Naive thymus-derived CD4-positive, alpha-beta T cell (primary cell): ENCODE measurements at regions of chr12 and their contacts with region 1.

Region 1: GRCh38 chr12:65169320-65170208 is at the start of gene LEMD3:
- DNase-seq: peak; percentile 87 to 97 (median 94)
- ATAC-seq: peak; percentile 95
- H3K4me3 ChIP-seq: peak within 1 kb of the TSS; percentile 84
- H3K4me3 Mint-ChIP-seq: peak within 1 kb of the TSS in 8 of 10 donors; percentile 92 to 100 (median 99)
- H3K27ac ChIP-seq: peak within 1 kb of the TSS; percentile 93
- H3K27ac Mint-ChIP-seq: peak within 1 kb of the TSS; percentile 94 to 100 (median 99)
- H3K4me1 ChIP-seq: peaks cover 33 to 40% of the 10 kb centered on the region in 2 donors
- H3K4me1 Mint-ChIP-seq: peaks cover 10 to 35% (median 23%) of the 10 kb centered on the region in 7 donors
- H3K27me3 ChIP-seq: no peaks in the 10 kb centered on the region
- H3K27me3 Mint-ChIP-seq: peaks cover 0 to 5% (median 2%) of the 10 kb centered on the region in 5 donors
- total RNA-seq, gene LEMD3: 37.8 to 60.1 (median 52.8) TPM

Region 2: GRCh38 chr12:63779498-63780481 is 1389.8 kb before region 1 on chr12 and contains the start of gene RXYLT1:
- CTCF ChIA-PET with region 1: no interaction called
- POLR2A ChIA-PET with region 1: no interaction called
- intact Hi-C with region 1: loop called (anchors 1 to 10 kb)
- DNase-seq: peak; percentile 68 to 85 (median 77)
- ATAC-seq: peak; percentile 98
- H3K4me3 ChIP-seq: peak within 1 kb of the TSS; percentile 72
- H3K4me3 Mint-ChIP-seq: peak within 1 kb of the TSS; percentile 91 to 99 (median 96)
- H3K27ac ChIP-seq: peak within 1 kb of the TSS; percentile 88
- H3K27ac Mint-ChIP-seq: peak within 1 kb of the TSS; percentile 89 to 98 (median 94)
- H3K4me1 ChIP-seq: peaks cover 3 to 13% of the 10 kb centered on the region in 2 donors
- H3K4me1 Mint-ChIP-seq: peaks cover 6 to 48% (median 25%) of the 10 kb centered on the region in 7 donors
- H3K27me3 ChIP-seq: no peaks in the 10 kb centered on the region
- H3K27me3 Mint-ChIP-seq: peaks cover 0 to 3% (median 0%) of the 10 kb centered on the region in 5 donors
- total RNA-seq, gene RXYLT1: 9.9 to 22.0 (median 15.4) TPM

Region 3: GRCh38 chr12:64451687-64452558 is 717.6 kb before region 1 on chr12 and contains the start of gene TBK1:
- CTCF ChIA-PET with region 1: no interaction called
- POLR2A ChIA-PET with region 1: interaction called, 4 read pairs
- intact Hi-C with region 1: loop called (anchors 1 to 5 kb)
- DNase-seq: peak in 8 of 9 donors; percentile 21 to 80 (median 34)
- ATAC-seq: peak; percentile 78
- H3K4me3 ChIP-seq: peak within 1 kb of the TSS; percentile 61
- H3K4me3 Mint-ChIP-seq: peak within 1 kb of the TSS; percentile 90 to 99 (median 94)
- H3K27ac ChIP-seq: peak within 1 kb of the TSS; percentile 74
- H3K27ac Mint-ChIP-seq: peak within 1 kb of the TSS; percentile 86 to 95 (median 94)
- H3K4me1 ChIP-seq: peaks cover 19 to 24% of the 10 kb centered on the region in 2 donors
- H3K4me1 Mint-ChIP-seq: peaks cover 20 to 54% (median 41%) of the 10 kb centered on the region in 7 donors
- H3K27me3 ChIP-seq: no peaks in the 10 kb centered on the region
- H3K27me3 Mint-ChIP-seq: no peaks in the 10 kb centered on the region
- total RNA-seq, gene TBK1: 9.0 to 34.0 (median 12.1) TPM

Region 4: GRCh38 chr12:65121049-65121955 is 48.3 kb before region 1 on chr12 and contains the start of gene WIF1:
- CTCF ChIA-PET with region 1: no interaction called
- POLR2A ChIA-PET with region 1: no interaction called
- intact Hi-C with region 1: loop called in 1 of 2 experiments (anchors 1 kb)
- DNase-seq: peak in 5 of 9 donors; percentile 6 to 34 (median 10)
- ATAC-seq: peak; percentile 66
- H3K4me3 ChIP-seq: peak within 1 kb of the TSS; percentile 22
- H3K4me3 Mint-ChIP-seq: peak within 1 kb of the TSS; percentile 42 to 77 (median 62)
- H3K27ac ChIP-seq: no peak within 1 kb of the TSS
- H3K27ac Mint-ChIP-seq: peak within 1 kb of the TSS in 1 of 9 donors; percentile 62
- H3K4me1 ChIP-seq: no peaks in the 10 kb centered on the region
- H3K4me1 Mint-ChIP-seq: peaks cover 0 to 12% (median 8%) of the 10 kb centered on the region in 7 donors
- H3K27me3 ChIP-seq: peaks cover 0 to 6% of the 10 kb centered on the region in 2 donors
- H3K27me3 Mint-ChIP-seq: peaks cover 41 to 59% (median 52%) of the 10 kb centered on the region in 5 donors
- total RNA-seq, gene WIF1: not detected

Region 5: DNA sequence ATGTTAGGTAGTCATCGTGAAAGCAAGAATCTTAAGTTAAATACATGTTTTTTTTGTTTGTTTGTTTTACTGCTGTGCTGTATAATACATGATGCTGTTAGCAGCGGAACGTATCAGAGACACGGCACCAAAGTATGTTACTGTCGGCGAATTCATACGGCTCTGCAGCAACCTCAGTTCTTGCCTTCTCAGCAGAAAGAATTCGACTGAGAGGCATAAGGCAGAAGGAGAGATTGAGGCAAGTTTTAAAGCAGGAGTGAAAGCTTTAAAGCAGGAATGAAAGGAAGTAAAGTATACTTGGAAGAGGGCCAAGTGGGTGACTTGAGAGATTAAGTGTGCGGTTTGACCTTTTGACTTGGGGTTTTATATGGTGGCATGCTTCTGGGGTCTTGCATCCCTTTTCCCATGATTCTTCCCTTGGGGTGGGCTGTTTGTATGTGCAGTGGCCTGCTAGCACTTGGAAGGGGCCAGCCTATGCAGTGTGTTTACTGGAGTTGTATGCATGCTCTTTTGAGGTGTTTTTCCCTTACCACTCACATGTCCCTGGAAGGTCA is 23.5 kb after region 1 on chr12:
- CTCF ChIA-PET with region 1: no interaction called
- POLR2A ChIA-PET with region 1: interaction called, 5 read pairs
- intact Hi-C with region 1: loop called in 1 of 2 experiments (anchors 2 kb)
- DNase-seq: no peak
- ATAC-seq: peak; percentile 14
- H3K4me3 ChIP-seq: no peak overlapping the region
- H3K4me3 Mint-ChIP-seq: peak overlapping the region in 8 of 10 donors; percentile 12 to 71 (median 54)
- H3K27ac ChIP-seq: no peak overlapping the region
- H3K27ac Mint-ChIP-seq: peak overlapping the region in 8 of 9 donors; percentile 0 to 83 (median 24)
- H3K4me1 ChIP-seq: peaks cover 0 to 13% of the 10 kb centered on the region in 2 donors
- H3K4me1 Mint-ChIP-seq: peaks cover 42 to 93% (median 81%) of the 10 kb centered on the region in 7 donors
- H3K27me3 ChIP-seq: no peaks in the 10 kb centered on the region
- H3K27me3 Mint-ChIP-seq: no peaks in the 10 kb centered on the region

Region 6: GRCh38 chr12:65740873-65741600 is 571.5 kb after region 1 on chr12:
- CTCF ChIA-PET with region 1: no interaction called
- POLR2A ChIA-PET with region 1: no interaction called
- intact Hi-C with region 1: loop called in 1 of 2 experiments (anchors 5 kb)
- DNase-seq: peak; percentile 37 to 74 (median 50)
- ATAC-seq: peak; percentile 82
- H3K4me3 ChIP-seq: peak overlapping the region; percentile 32
- H3K4me3 Mint-ChIP-seq: peak overlapping the region; percentile 33 to 89 (median 82)
- H3K27ac ChIP-seq: no peak overlapping the region
- H3K27ac Mint-ChIP-seq: peak overlapping the region in 8 of 9 donors; percentile 4 to 88 (median 61)
- H3K4me1 ChIP-seq: no peaks in the 10 kb centered on the region
- H3K4me1 Mint-ChIP-seq: peaks cover 10 to 20% (median 14%) of the 10 kb centered on the region in 7 donors
- H3K27me3 ChIP-seq: no peaks in the 10 kb centered on the region
- H3K27me3 Mint-ChIP-seq: peaks cover 14 to 43% (median 25%) of the 10 kb centered on the region in 5 donors